MCF 10A (cell line): ENCODE measurements at regions of chr3 and their contacts with region 1.

Region 1: DNA sequence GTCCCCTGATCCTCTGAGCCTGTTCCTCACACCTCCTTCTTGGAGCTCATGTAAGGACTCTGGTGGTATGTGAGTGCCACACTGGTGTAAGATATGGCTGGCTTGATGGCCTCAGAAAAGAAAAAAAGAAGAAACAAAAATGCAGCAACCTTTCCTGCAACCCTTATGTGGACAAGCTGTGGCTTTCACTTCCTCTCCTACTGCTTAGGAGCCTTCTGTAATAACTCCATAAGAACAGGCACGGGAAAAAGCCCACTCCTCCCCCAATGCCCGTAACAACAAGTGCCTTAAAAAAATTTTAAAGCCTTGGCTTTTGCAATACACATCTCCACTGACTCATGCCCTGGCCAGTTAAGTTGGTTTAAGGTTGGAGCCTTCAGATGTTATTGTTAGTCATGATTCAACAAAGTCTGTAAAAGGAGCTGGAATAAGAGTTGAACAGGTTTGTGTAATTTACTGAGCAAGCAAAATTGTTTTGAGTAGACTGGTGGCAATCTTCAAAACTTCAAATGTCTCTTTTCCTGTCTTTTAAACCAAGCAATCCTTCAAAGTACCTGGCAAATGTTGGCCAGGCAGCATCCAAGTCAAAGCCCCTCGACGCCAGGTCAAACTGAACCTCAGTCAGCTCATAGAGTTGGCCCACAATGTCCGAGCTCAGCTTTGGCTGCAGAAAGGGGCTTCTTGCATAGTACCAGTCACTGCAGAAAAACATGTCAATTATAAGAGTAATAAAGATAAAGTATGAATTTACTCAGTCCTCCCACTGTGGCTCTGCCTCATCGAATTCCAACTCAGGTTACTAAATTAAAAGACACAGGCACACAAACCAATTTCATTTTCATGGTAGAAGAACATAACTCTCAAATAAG is 22.9 kb downstream of the FYCO1 start:
- DNase-seq: peak; percentile 89
- H3K4me3 Mint-ChIP-seq: no peak overlapping the region
- H3K27ac Mint-ChIP-seq: peak overlapping the region; percentile 75
- H3K4me1 Mint-ChIP-seq: peaks cover 10% of the 10 kb centered on the region
- H3K27me3 Mint-ChIP-seq: no peaks in the 10 kb centered on the region
- CTCF ChIP-seq: no peak

Region 2: DNA sequence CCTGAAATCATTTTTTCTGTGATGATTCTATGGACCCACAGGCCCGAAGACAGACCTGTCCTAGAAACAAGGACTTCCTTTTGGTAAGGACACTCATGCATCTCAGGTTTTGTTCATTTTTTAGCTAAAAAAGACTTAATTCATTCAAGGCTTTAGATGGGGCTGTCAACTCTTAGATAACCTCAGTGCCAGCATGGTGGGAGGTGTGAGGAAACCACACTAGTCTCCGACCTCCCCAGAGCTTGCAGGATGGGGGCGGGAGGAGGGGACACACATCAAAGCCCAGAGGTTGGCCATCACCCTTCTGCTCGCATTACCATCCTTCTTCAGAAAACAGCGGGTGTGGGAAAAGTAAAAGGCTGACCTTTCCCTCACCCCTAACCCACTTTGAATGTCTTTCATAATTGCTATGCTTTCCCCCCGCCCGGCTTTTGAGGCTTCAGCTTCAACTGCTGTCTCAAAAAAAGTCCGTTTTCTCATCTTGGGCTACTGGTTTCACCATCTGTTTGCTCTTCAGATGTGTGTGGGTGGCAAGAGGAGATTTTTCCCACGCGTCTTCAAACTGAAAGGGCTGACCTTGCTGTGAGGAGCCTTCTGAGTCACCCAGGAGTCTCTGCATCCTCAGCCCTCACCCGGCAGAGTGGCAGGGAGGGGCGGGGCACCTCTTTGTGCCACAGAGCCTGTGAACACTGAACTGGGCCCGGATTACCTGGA is 57.1 kb before region 1 on chr3:
- CTCF ChIA-PET with region 1: no interaction called
- POLR2A ChIA-PET with region 1: no interaction called
- intact Hi-C with region 1: no loop called
- DNase-seq: peak; percentile 92
- H3K4me3 Mint-ChIP-seq: no peak overlapping the region
- H3K27ac Mint-ChIP-seq: no peak overlapping the region
- H3K4me1 Mint-ChIP-seq: peaks cover 7% of the 10 kb centered on the region
- H3K27me3 Mint-ChIP-seq: no peaks in the 10 kb centered on the region
- CTCF ChIP-seq: no peak

Region 3: DNA sequence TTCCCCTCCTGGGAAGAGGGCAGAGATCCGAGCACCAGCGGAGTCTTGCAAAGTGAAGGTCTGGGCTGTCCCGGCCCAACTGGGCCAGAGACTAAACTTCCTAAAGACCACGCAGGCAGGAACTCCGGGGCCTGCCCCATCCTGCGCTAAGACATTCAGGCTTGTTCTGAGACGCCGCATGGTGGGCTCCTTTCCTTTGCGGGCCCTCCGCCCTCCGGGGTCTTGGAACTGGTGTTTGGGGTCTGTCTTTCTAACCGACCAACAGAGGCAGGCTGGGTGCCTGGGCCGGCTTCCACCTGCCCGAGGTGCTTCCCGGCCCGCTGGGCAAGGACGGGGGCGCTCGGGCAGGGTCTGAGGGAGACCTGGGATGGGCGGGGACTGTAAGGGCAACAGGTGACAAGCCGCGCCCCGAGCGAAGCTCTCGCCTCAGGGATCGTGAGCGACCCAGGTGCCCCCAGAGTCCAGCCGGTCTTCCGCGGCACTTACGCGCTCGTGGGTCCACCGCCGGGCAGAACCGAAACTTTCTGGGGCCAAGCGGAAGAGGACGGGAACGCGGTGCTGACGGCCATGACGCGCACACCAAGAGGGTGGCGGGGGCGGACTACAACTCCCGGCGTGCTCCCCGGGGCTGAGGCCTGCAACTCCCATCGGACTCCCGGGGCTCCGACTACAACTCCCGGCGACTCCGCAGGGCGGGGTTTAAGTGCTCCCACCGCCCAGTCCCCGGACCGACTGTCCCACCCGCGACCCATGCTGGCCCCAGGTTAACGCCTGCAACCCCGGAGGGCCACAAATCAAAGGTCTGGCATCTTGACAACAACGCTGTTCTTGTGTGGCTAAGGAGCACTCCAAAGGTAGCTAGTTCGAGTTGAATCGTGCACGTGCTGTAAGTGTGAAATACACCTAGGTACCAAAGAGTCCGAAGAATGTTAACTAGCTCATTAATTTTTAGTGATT is 22.7 kb after region 1 on chr3 and contains the start of gene FYCO1:
- CTCF ChIA-PET with region 1: interaction called, 3 read pairs
- POLR2A ChIA-PET with region 1: interaction called, 24 read pairs
- intact Hi-C with region 1: no loop called
- DNase-seq: peak; percentile 84
- H3K4me3 Mint-ChIP-seq: peak within 1 kb of the TSS; percentile 80
- H3K27ac Mint-ChIP-seq: peak within 1 kb of the TSS; percentile 35
- H3K4me1 Mint-ChIP-seq: peaks cover 6% of the 10 kb centered on the region
- H3K27me3 Mint-ChIP-seq: no peaks in the 10 kb centered on the region
- CTCF ChIP-seq: no peak
- total RNA-seq, gene FYCO1: 17.0 and 18.4 TPM in 2 replicates